ENCODE measurements at regions of chr9 and their contacts with region 1.

Region 1: DNA sequence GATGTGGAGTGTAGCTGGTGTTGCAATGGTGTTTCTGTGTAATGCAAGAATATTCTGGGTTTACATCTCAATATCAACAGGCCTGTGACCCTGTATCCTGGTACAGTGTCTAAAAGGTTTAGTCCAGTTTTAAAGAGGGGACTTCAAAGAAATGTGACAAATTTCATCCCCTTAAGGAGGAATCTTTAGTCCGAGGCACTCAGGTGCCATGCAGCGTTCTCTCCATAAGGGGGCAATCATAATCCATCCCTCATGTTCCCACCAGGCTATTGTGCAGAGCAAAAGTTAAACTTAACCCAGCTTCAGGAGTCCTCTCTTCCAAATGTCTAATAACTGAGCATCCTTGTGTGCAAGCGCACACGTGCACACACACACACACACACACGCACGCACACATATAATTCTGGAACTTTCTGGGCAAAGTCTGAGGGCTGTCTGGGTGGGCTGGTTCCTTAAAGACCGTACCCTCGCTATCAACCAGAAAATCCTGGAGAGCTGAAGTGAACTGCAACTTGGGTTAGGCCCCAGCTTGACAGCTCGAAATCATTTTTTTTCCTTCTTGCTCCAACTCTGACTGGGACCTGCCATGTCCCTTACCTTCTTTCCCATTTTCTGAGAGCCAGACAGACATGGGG is 46.0 kb downstream of the CRB2 start:
- DNase-seq: no peak
- ATAC-seq: peak; percentile 75

Region 2: DNA sequence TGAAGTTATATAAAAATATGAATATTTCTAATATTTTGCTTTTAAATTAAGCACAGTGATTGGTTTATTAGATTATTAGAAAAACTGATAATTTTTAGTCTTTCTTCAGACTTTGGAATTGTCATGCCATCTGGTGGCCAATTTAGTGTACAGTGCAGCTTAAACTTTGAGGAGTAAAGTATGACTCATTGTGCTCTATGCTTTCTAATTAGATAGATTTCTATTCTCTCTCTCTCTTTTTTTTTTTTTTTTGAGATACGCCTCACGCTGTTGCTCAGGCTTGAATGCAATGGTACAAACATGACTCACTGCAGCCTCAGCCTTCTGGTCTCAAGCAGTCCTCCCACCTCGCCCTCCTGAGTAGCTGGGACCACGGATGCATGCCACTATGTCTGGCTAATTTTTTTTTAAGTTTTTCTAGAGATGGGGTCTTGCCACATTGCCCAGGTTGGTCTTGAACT is 410.6 kb before region 1 on chr9:
- intact Hi-C with region 1: no loop called
- DNase-seq: no peak
- ATAC-seq: peak; percentile 73

Region 3: DNA sequence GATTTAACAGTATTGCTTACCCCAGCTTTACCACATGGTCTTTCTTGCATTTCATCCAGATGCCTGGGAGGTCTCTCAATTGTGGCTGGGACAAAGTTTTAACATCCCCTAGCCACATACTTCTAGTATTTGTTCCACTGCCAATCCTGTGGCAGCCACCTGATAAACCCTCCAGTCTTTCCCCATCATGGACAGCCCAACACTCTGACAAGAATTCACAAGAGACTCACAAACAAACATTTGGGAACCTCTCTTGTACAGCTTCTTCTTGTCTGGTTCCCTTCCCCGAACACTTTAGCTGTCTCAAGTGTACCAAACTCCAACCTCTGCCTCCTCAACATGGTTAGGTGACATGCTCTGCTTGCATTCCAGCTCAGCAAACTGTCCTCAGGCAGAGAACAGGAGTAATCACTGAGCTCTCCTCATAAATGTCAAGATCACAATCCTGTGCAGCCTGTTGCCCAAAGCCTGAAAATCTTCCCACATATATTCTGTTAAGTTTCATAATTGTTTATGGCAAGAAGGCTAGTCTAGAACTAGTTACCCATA is 193.3 kb before region 1 on chr9:
- intact Hi-C with region 1: no loop called
- DNase-seq: no peak
- ATAC-seq: no peak

Region 4: DNA sequence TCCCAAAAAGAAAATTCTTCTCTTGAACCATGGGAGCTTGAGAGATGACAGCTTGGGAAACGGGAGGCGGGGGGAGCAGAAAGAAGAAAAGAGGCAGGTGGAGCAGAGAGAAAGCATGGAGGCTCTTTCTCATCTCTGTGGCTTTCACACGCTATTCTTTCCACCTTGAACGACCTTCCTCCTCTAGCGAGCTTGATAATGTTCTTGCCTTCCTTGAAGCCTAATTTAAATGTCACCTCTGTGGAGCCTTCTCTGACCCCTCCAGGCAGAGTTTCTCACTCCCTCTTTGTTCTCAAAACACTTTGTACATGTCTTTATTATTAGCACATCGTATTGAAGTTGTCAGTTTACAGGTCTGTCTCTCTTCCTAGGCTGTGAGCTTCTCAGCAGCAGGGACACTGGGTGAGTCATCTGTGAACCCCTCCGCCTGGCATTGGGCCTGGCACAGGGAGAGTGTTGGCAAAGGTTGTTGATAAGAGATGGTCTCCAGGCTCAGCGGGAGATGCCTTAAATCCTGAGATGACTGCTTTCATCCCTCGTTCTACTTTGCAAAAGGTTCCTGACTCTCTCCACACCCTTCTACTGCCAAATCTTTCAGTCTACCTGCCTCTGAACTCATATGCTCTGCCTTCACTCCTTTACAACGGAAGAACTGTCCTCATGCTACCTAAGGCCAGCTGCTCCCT is 119.5 kb before region 1 on chr9:
- intact Hi-C with region 1: no loop called
- DNase-seq: no peak
- ATAC-seq: no peak

Region 5: DNA sequence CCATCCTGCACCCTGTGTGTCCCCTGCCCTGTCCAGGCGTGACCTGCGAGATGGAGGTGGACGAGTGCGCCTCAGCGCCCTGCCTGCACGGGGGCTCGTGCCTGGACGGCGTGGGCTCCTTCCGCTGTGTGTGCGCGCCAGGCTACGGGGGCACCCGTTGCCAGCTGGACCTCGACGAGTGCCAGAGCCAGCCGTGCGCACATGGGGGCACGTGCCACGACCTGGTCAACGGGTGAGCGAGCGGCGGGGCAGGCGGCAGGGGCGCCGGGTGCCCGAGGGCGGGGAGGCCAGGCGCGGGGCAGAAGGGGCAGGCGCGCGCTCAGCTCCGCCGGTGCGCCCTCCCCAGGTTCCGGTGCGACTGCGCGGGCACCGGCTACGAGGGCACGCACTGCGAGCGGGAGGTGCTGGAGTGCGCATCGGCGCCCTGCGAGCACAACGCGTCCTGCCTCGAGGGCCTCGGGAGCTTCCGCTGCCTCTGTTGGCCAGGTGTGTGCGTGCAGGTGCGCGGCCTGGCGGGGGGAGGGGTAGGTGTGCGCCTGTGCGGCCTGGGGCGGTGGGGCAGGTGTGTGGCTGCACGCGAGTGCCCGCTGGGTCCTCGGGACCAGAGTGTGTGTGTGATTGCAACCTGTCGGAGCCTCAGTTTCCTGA is 36.0 kb before region 1 on chr9:
- intact Hi-C with region 1: loop called (anchors 1 kb)
- DNase-seq: no peak
- ATAC-seq: no peak

Region 6: GRCh38 chr9:123523001-123523400 is 121.0 kb after region 1 on chr9:
- intact Hi-C with region 1: loop called (anchors 10 kb)
- DNase-seq: no peak
- ATAC-seq: no peak